HepG2 (cell line): ENCODE measurements at regions of chr12 and their contacts with region 1.

Region 1: GRCh38 chr12:62891805-62892549 is 43.0 kb downstream of the PPM1H start:
- DNase-seq: peak; percentile 97
- ATAC-seq: peak; percentile 93
- H3K4me3 ChIP-seq: peak overlapping the region in 2 of 3 experiments; percentile 15 to 19; a peak in 1 of 6 replicates
- H3K27ac ChIP-seq: peak overlapping the region; percentile 96
- H3K4me1 ChIP-seq: peaks cover 74% of the 10 kb centered on the region
- H3K27me3 ChIP-seq: no peaks in the 10 kb centered on the region
- CTCF ChIP-seq: no peak
- EP300 ChIP-seq: peak in 1 of 2 experiments; percentile 95; a peak in 3 of 4 replicates
- POLR2A ChIP-seq: no peak
- RAD21 ChIP-seq: no peak

Region 2: GRCh38 chr12:62785941-62786559 is 105.9 kb before region 1 on chr12:
- CTCF ChIA-PET with region 1: no interaction called
- POLR2A ChIA-PET with region 1: no interaction called
- in situ Hi-C with region 1: no loop called
- intact Hi-C with region 1: no loop called
- DNase-seq: no peak
- ATAC-seq: peak; percentile 30; the same call in 1 of the 3 replicates
- H3K4me3 ChIP-seq: no peak overlapping the region
- H3K27ac ChIP-seq: no peak overlapping the region
- H3K4me1 ChIP-seq: peaks cover 8% of the 10 kb centered on the region; the same call in 1 of the 2 replicates
- H3K27me3 ChIP-seq: no peaks in the 10 kb centered on the region
- CTCF ChIP-seq: no peak
- EP300 ChIP-seq: no peak
- POLR2A ChIP-seq: no peak
- RAD21 ChIP-seq: no peak

Region 3: GRCh38 chr12:62841846-62842245 is 50.1 kb before region 1 on chr12:
- CTCF ChIA-PET with region 1: no interaction called
- POLR2A ChIA-PET with region 1: no interaction called
- in situ Hi-C with region 1: no loop called
- intact Hi-C with region 1: loop called (anchors 5 kb)
- DNase-seq: no peak
- ATAC-seq: no peak
- H3K4me3 ChIP-seq: no peak overlapping the region
- H3K27ac ChIP-seq: no peak overlapping the region
- H3K4me1 ChIP-seq: peaks cover 67% of the 10 kb centered on the region
- H3K27me3 ChIP-seq: no peaks in the 10 kb centered on the region
- CTCF ChIP-seq: no peak
- EP300 ChIP-seq: no peak
- POLR2A ChIP-seq: no peak
- RAD21 ChIP-seq: no peak

Region 4: GRCh38 chr12:62928632-62929031 is 36.7 kb after region 1 on chr12:
- CTCF ChIA-PET with region 1: no interaction called
- POLR2A ChIA-PET with region 1: interaction called, 13 read pairs
- in situ Hi-C with region 1: no loop called
- intact Hi-C with region 1: loop called (anchors 1 kb)
- DNase-seq: peak; percentile 65
- ATAC-seq: peak; percentile 76
- H3K4me3 ChIP-seq: no peak overlapping the region
- H3K27ac ChIP-seq: peak overlapping the region; percentile 34
- H3K4me1 ChIP-seq: peaks cover 71% of the 10 kb centered on the region
- H3K27me3 ChIP-seq: no peaks in the 10 kb centered on the region
- CTCF ChIP-seq: no peak
- EP300 ChIP-seq: peak in 1 of 2 experiments; percentile 78; a peak in 2 of 4 replicates
- POLR2A ChIP-seq: no peak
- RAD21 ChIP-seq: no peak

Region 5: DNA sequence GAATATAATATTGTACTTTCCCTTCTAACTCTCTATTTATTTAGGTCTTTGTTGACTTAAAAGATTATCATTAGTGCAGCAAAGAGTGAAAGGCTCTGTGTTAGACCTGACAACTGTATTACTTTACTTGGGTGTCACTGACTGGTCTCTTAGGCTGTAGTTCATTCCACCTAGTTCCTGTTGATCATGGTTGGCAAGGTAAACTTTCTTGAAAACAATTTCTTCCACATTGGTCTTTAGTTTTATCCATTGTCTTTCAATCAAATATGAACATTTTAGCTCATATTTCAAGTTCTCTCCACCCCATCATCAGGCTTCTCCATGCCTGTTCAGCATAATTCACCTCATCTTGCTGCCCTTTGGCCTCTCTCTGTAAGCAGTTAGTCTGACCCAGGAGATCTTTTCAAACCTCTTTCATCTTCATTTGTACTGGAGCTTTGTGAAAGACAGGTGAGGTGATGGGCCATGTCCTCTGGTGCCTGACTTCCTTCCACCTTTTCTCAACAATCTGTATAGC is 75.1 kb after region 1 on chr12:
- CTCF ChIA-PET with region 1: no interaction called
- POLR2A ChIA-PET with region 1: interaction called, 3 read pairs
- in situ Hi-C with region 1: no loop called
- intact Hi-C with region 1: loop called (anchors 2 kb)
- DNase-seq: peak; percentile 90
- ATAC-seq: peak; percentile 96
- H3K4me3 ChIP-seq: peak overlapping the region; percentile 12 to 39 (median 21); a peak in 5 of 6 replicates
- H3K27ac ChIP-seq: peak overlapping the region; percentile 97
- H3K4me1 ChIP-seq: peaks cover 93% of the 10 kb centered on the region
- H3K27me3 ChIP-seq: no peaks in the 10 kb centered on the region
- CTCF ChIP-seq: no peak
- EP300 ChIP-seq: peak in 1 of 2 experiments; percentile 77; a peak in 2 of 4 replicates
- POLR2A ChIP-seq: no peak
- RAD21 ChIP-seq: no peak